Gastrocnemius medialis (tissue), 4 donors: ENCODE measurements at regions of chr6 and their contacts with region 1.

Region 1: DNA sequence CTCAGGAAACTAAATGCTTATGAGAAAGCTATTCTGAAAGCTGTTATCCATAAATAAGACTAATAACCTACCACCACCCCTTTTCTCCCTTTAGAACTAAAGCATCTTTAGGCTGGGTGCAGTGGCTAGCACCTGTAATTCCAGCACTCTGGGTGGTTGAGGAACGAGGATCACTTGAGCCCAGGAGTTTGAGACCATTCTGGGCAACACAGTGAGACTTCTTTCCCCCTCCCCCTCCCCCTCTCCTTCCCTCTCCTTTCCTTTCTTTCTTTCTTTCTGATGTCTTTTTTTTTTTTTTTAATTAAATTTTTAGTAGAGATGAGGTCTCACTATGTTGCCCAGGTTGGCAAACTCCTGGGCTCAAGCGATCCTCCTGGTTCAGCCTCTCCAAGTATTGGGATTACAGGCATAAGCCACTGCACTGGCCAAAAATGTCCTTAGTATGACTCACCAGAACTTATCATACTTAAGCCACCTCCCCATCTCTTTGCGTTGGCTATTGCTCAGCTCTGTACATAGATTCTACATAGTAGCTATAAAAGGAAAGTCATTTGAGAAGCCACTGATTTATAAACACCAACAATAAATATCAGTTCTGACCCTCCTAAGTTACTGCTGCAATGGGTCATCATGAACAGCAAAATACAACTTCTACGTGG is 54.8 kb upstream of the SPDEF start:
- DNase-seq: no peak
- ATAC-seq: no peak
- H3K4me3 ChIP-seq: no peak overlapping the region
- H3K27ac ChIP-seq: peak overlapping the region; percentile 60 to 74 (median 68)
- H3K4me1 ChIP-seq: peaks cover 34 to 41% of the 10 kb centered on the region in 2 donors
- H3K27me3 ChIP-seq: no peaks in the 10 kb centered on the region
- CTCF ChIP-seq: no peak
- POLR2A ChIP-seq: no peak

Region 2: GRCh38 chr6:34196126-34196830 is 414.7 kb before region 1 on chr6:
- in situ Hi-C with region 1: loop called in 3 of 4 experiments (anchors 25 kb)
- intact Hi-C with region 1: no loop called
- DNase-seq: peak; percentile 62 to 76
- ATAC-seq: peak; percentile 95 to 98
- H3K4me3 ChIP-seq: peak overlapping the region; percentile 56 to 87 (median 64)
- H3K27ac ChIP-seq: no peak overlapping the region
- H3K4me1 ChIP-seq: peaks cover 3 to 5% of the 10 kb centered on the region in 2 donors
- H3K27me3 ChIP-seq: no peaks in the 10 kb centered on the region
- CTCF ChIP-seq: peak; percentile 94 to 98 (median 98)
- POLR2A ChIP-seq: no peak

Region 3: GRCh38 chr6:34223956-34224940 is 386.7 kb before region 1 on chr6:
- in situ Hi-C with region 1: loop called in 1 of 4 experiments (anchors 25 kb)
- intact Hi-C with region 1: no loop called
- DNase-seq: peak; percentile 83 to 92
- ATAC-seq: peak; percentile 92 to 93
- H3K4me3 ChIP-seq: peak overlapping the region; percentile 53 to 77 (median 72)
- H3K27ac ChIP-seq: peak overlapping the region; percentile 90 to 99 (median 96)
- H3K4me1 ChIP-seq: peaks cover 11 to 12% of the 10 kb centered on the region in 2 donors
- H3K27me3 ChIP-seq: no peaks in the 10 kb centered on the region
- CTCF ChIP-seq: no peak
- POLR2A ChIP-seq: peak; percentile 91 to 94

Region 4: GRCh38 chr6:34273242-34273805 is 337.6 kb before region 1 on chr6:
- in situ Hi-C with region 1: loop called in 1 of 4 experiments (anchors 25 kb)
- intact Hi-C with region 1: no loop called
- DNase-seq: no peak
- ATAC-seq: no peak
- H3K4me3 ChIP-seq: no peak overlapping the region
- H3K27ac ChIP-seq: peak overlapping the region; percentile 7 to 55 (median 37)
- H3K4me1 ChIP-seq: peaks cover 32 to 36% of the 10 kb centered on the region in 2 donors
- H3K27me3 ChIP-seq: no peaks in the 10 kb centered on the region
- CTCF ChIP-seq: no peak
- POLR2A ChIP-seq: no peak

Region 5: DNA sequence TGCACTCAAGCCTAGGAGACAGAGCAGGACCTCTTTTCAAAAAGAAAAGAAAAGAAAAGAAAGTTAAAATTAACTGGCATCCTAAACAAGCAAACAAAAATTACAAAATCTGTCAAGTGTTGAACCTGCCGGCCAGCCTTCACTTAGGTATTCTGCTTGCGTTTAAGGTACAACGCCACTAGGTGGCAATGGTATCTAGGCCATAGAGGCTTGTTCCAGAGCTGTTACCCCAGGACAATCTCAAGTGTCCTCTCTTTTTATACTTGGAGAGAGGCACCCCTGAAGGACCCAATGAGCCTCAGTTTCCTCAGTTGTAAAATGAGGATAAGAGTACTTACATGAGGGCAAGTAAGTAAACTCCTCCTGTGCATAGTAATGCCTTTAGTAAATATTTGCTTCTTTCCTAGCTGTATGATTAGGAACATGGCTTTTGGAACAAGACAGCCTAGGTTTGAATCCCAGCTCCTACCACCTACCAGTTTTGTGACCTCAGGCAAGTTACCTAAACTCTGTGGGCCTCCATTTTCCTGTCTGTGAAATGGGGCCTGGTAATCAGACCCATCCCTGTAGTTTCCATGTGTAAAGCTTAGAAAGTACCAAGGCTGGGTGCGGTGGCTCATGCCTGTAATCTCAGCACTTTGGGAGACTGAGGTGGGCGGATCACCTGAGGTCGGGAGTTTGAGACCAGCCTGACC is 150.9 kb before region 1 on chr6:
- in situ Hi-C with region 1: loop called in 3 of 4 experiments (anchors 10 to 25 kb)
- intact Hi-C with region 1: loop called (anchors 1 kb)
- DNase-seq: peak; percentile 24 to 49
- ATAC-seq: peak; percentile 92 to 95
- H3K4me3 ChIP-seq: no peak overlapping the region
- H3K27ac ChIP-seq: no peak overlapping the region
- H3K4me1 ChIP-seq: no peaks in the 10 kb centered on the region
- H3K27me3 ChIP-seq: peaks cover 0 to 5% (median 2%) of the 10 kb centered on the region in 3 donors
- CTCF ChIP-seq: peak; percentile 56 to 78 (median 64)
- POLR2A ChIP-seq: no peak

Region 6: GRCh38 chr6:34491091-34491430 is 119.9 kb before region 1 on chr6:
- in situ Hi-C with region 1: no loop called
- intact Hi-C with region 1: no loop called
- DNase-seq: peak in 1 of 2 donors; percentile 33
- ATAC-seq: peak; percentile 72 to 81
- H3K4me3 ChIP-seq: peak overlapping the region in 2 of 4 donors; percentile 21 to 36
- H3K27ac ChIP-seq: peak overlapping the region in 3 of 4 donors; percentile 53 to 78 (median 56)
- H3K4me1 ChIP-seq: peaks cover 0 to 6% of the 10 kb centered on the region in 2 donors
- H3K27me3 ChIP-seq: no peaks in the 10 kb centered on the region
- CTCF ChIP-seq: no peak
- POLR2A ChIP-seq: no peak

Region 7: GRCh38 chr6:34535646-34536045 is 75.3 kb before region 1 on chr6:
- in situ Hi-C with region 1: no loop called
- intact Hi-C with region 1: no loop called
- DNase-seq: no peak
- ATAC-seq: no peak
- H3K4me3 ChIP-seq: no peak overlapping the region
- H3K27ac ChIP-seq: no peak overlapping the region
- H3K4me1 ChIP-seq: no peaks in the 10 kb centered on the region
- H3K27me3 ChIP-seq: no peaks in the 10 kb centered on the region
- CTCF ChIP-seq: no peak
- POLR2A ChIP-seq: no peak

Region 8: DNA sequence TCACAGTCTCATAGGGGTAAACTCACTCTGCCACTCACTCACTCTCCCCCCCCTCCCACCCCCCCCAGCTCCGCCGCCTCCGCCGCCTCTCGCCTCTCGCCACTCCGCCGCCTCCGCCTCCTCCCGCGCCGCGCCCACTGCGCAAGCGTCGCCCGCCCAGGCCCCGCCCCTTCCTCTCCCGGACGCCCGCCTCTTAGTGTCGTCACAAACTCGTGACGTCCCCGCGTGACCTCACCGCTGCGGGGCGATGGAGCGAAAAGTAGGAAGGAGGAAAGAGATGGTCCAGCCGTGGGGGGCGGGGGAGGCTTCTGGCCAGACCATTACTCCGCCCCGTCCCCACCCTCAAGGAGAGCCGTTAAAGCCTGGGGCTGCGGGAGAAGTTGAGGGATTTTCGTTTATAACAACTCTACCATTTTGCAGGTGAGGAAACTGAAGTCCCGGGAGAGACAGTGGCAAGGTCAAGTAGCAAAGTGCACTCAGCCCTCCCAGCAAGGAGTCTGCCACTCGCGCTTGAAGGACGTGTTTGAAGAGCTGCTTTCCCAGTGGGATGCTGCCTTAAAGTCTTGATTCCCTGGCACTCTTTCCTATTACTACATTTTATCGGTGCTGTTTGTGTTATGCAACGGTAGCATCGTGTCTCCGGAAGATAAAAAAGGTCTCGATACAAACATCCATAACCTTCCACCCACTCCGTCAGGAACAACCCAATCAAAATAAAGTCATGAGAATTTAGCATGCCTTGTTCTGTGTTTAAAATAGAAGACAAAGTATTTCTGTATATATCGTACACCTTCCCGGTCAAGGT is 86.0 kb after region 1 on chr6 and contains the start of gene ILRUN:
- in situ Hi-C with region 1: no loop called
- intact Hi-C with region 1: loop called (anchors 5 kb)
- DNase-seq: peak; percentile 92 to 94
- ATAC-seq: peak; percentile 78 to 80
- H3K4me3 ChIP-seq: peak within 1 kb of the TSS; percentile 79 to 100 (median 95)
- H3K27ac ChIP-seq: peak within 1 kb of the TSS; percentile 99 to 100 (median 100)
- H3K4me1 ChIP-seq: peaks cover 30 to 31% of the 10 kb centered on the region in 2 donors
- H3K27me3 ChIP-seq: no peaks in the 10 kb centered on the region
- CTCF ChIP-seq: no peak
- POLR2A ChIP-seq: peak; percentile 76 to 87
- total RNA-seq, gene ILRUN: 136 to 252 (median 169) TPM